GM12878 (cell line): ENCODE measurements at regions of chr1 and their contacts with region 1.

Region 1: GRCh38 chr1:150629115-150629928 is at the start of gene ENSA:
- DNase-seq: peak; percentile 99
- ATAC-seq: peak; percentile 95
- H3K4me3 ChIP-seq: peak within 1 kb of the TSS; percentile 81
- H3K27ac ChIP-seq: peak within 1 kb of the TSS; percentile 97
- H3K4me1 ChIP-seq: peaks cover 5% of the 10 kb centered on the region; the same call in 1 of the 2 replicates
- H3K27me3 ChIP-seq: no peaks in the 10 kb centered on the region
- CTCF ChIP-seq: no peak
- EP300 ChIP-seq: no peak
- POLR2A ChIP-seq: peak; percentile 92
- RAD21 ChIP-seq: no peak
- polyA plus RNA-seq, gene ENSA: 56.1 to 86.8 TPM

Region 2: GRCh38 chr1:150567717-150568593 is 61.4 kb before region 1 on chr1:
- CTCF ChIA-PET with region 1: interaction called, 390 read pairs
- POLR2A ChIA-PET with region 1: interaction called, 67 read pairs
- RAD21 ChIA-PET with region 1: interaction called, 149 read pairs
- SMC1A ChIA-PET with region 1: interaction called, 367 read pairs
- in situ Hi-C with region 1: no loop called
- intact Hi-C with region 1: loop called (anchors 2 kb)
- DNase-seq: no peak
- ATAC-seq: peak; percentile 14
- H3K4me3 ChIP-seq: peak overlapping the region; percentile 49
- H3K27ac ChIP-seq: peak overlapping the region; percentile 98
- H3K4me1 ChIP-seq: peaks cover 70% of the 10 kb centered on the region
- H3K27me3 ChIP-seq: no peaks in the 10 kb centered on the region
- CTCF ChIP-seq: no peak
- EP300 ChIP-seq: peak in 1 of 2 experiments; percentile 42; a peak in 1 of 4 replicates
- POLR2A ChIP-seq: peak; percentile 25; the same call in 1 of the 2 replicates
- RAD21 ChIP-seq: no peak

Region 3: DNA sequence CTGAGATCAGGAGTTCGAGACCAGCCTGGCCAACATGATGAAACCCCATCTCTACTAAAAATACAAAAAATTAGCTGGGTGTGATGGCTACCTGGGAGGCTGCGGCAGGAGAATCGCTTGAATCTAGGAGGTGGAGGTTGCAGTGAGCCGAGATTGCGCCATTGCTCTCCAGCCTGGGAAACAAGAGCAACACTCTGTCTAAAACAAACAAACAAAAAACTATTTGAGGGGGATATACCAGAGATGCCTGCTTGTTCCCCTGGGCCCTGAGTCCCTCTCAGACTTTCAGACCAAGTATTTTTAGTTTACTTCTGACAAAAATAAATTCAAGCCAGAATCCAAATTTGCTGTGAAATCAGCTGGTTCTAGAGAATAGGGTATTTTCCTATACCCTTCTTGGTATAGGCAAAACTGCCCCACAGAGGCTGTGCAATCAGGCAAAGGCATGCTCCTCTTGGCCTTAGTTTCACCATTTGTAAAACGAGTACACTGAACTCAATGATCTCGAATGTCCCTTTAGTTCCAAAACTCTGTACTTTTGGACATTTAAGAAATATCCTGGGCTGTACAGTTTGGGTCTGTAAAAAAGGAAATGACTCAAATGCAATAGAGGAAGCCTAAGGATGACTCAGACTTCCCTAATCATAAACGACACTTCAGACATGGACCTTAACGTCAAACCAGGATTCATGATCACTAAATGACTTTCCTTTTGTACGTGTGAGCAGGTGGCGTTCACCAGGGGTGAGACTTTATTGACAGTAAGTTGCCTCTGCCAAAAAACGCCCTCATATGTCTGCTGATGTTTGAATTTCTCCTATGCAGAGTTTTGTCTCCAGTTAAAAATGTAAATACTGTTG is 16.0 kb before region 1 on chr1:
- CTCF ChIA-PET with region 1: interaction called, 6 read pairs
- POLR2A ChIA-PET with region 1: interaction called, 7 read pairs
- RAD21 ChIA-PET with region 1: interaction called, 4 read pairs
- SMC1A ChIA-PET with region 1: interaction called, 35 read pairs
- in situ Hi-C with region 1: no loop called
- intact Hi-C with region 1: no loop called
- DNase-seq: peak; percentile 79
- ATAC-seq: peak; percentile 68
- H3K4me3 ChIP-seq: no peak overlapping the region
- H3K27ac ChIP-seq: peak overlapping the region; percentile 80
- H3K4me1 ChIP-seq: peaks cover 41% of the 10 kb centered on the region
- H3K27me3 ChIP-seq: no peaks in the 10 kb centered on the region
- CTCF ChIP-seq: no peak
- EP300 ChIP-seq: peak; percentile 85 to 98
- POLR2A ChIP-seq: 0 out of 2 replicates have a peak, but pooled peaks have one; percentile 20
- RAD21 ChIP-seq: no peak

Region 4: GRCh38 chr1:150765296-150765976 is 136.1 kb after region 1 on chr1 and contains the start of gene CTSS:
- CTCF ChIA-PET with region 1: no interaction called
- POLR2A ChIA-PET with region 1: interaction called, 5 read pairs
- RAD21 ChIA-PET with region 1: interaction called, 5 read pairs
- SMC1A ChIA-PET with region 1: interaction called, 4 read pairs
- in situ Hi-C with region 1: no loop called
- intact Hi-C with region 1: loop called (anchors 10 kb)
- DNase-seq: peak; percentile 88
- ATAC-seq: peak; percentile 90
- H3K4me3 ChIP-seq: peak within 1 kb of the TSS; percentile 77
- H3K27ac ChIP-seq: peak within 1 kb of the TSS; percentile 96
- H3K4me1 ChIP-seq: peaks cover 9% of the 10 kb centered on the region
- H3K27me3 ChIP-seq: no peaks in the 10 kb centered on the region
- CTCF ChIP-seq: no peak
- EP300 ChIP-seq: no peak; a peak in 1 of 4 replicates
- POLR2A ChIP-seq: no peak
- RAD21 ChIP-seq: no peak
- polyA plus RNA-seq, gene CTSS: 68.6 to 84.8 TPM

Region 5: DNA sequence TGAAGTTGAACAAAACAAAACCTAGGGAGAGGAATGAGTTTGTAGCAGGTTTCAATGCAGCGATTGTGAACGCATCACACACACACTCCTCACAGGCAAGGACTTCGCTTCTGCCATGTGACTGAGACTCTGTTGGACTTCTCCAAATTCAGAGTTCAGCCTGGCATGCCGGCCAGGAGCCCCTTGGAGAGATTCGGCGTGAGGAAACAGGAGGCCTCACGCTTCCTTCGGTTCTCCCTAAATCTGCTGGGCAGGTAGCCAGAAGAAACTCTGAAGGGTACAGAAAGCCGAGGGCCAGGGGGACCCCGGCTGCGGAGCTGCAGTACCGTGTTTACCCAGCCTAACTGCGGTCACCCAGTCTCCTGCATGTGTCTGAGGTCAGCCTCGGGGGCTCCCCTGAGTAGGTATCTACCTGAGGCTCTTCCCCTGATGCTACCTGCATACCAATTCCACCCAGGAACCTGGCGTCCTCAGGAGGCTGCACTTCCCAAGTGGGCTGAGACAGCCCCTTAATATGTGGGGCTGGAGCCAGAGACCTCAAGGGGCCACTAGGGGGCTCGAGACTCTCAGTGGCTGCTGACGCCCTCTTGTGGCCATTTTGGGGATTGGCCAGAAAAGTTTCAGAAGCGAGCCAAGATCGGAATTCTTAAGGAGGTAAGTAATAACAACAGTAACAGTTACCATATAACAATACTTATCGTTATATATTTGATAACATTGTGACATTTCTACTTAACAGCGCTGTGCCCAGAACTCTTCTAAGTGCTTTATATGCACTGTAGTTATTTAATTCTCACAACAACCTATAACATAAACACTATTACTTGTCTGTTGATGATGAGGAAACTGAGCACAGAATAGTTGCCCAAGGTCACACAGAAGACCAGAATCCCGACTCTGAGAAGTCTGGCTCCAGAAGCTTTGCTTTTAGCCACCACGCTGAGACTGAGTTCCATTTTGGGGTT is 350.1 kb after region 1 on chr1:
- CTCF ChIA-PET with region 1: no interaction called
- POLR2A ChIA-PET with region 1: interaction called, 3 read pairs
- RAD21 ChIA-PET with region 1: no interaction called
- SMC1A ChIA-PET with region 1: no interaction called
- in situ Hi-C with region 1: no loop called
- intact Hi-C with region 1: loop called (anchors 10 kb)
- DNase-seq: peak; percentile 40
- ATAC-seq: peak; percentile 78
- H3K4me3 ChIP-seq: no peak overlapping the region
- H3K27ac ChIP-seq: no peak overlapping the region
- H3K4me1 ChIP-seq: no peaks in the 10 kb centered on the region
- H3K27me3 ChIP-seq: no peaks in the 10 kb centered on the region; a peak in 2 of 4 replicates
- CTCF ChIP-seq: peak; percentile 100; a peak in 5 of 6 replicates
- EP300 ChIP-seq: no peak
- POLR2A ChIP-seq: no peak
- RAD21 ChIP-seq: peak; percentile 79

Region 6: GRCh38 chr1:151502923-151503780 is 873.8 kb after region 1 on chr1:
- CTCF ChIA-PET with region 1: no interaction called
- POLR2A ChIA-PET with region 1: no interaction called
- RAD21 ChIA-PET with region 1: no interaction called
- SMC1A ChIA-PET with region 1: no interaction called
- in situ Hi-C with region 1: no loop called
- intact Hi-C with region 1: no loop called
- DNase-seq: no peak
- ATAC-seq: peak; percentile 72
- H3K4me3 ChIP-seq: no peak overlapping the region
- H3K27ac ChIP-seq: no peak overlapping the region
- H3K4me1 ChIP-seq: no peaks in the 10 kb centered on the region
- H3K27me3 ChIP-seq: no peaks in the 10 kb centered on the region; a peak in 1 of 4 replicates
- CTCF ChIP-seq: no peak
- EP300 ChIP-seq: no peak
- POLR2A ChIP-seq: no peak
- RAD21 ChIP-seq: no peak